Common myeloid progenitor, CD34-positive (primary cell): ENCODE measurements at regions of chr1 and their contacts with region 1.

Region 1: GRCh38 chr1:155308493-155309422 is at the start of gene FDPS:
- DNase-seq: peak; percentile 99 to 100 (median 100)
- H3K4me3 ChIP-seq: peak within 1 kb of the TSS; percentile 83 to 97 (median 93)
- H3K27ac ChIP-seq: peak within 1 kb of the TSS; percentile 75 to 95
- H3K4me1 ChIP-seq: peaks cover 4 to 39% (median 21%) of the 10 kb centered on the region in 4 experiments
- H3K27me3 ChIP-seq: no peaks in the 10 kb centered on the region

Region 2: GRCh38 chr1:155277070-155277895 is 31.5 kb before region 1 on chr1 and contains the start of gene HCN3:
- CTCF ChIA-PET with region 1: interaction called, 17 read pairs
- POLR2A ChIA-PET with region 1: interaction called, 5 read pairs
- DNase-seq: peak; percentile 93 to 95 (median 93)
- H3K4me3 ChIP-seq: peak within 1 kb of the TSS; percentile 34 to 85 (median 78)
- H3K27ac ChIP-seq: no peak within 1 kb of the TSS
- H3K4me1 ChIP-seq: peaks cover 11 to 32% (median 28%) of the 10 kb centered on the region in 4 experiments
- H3K27me3 ChIP-seq: no peaks in the 10 kb centered on the region